PC-3 (cell line): ENCODE measurements at regions of chr20 and their contacts with region 1.

Region 1: DNA sequence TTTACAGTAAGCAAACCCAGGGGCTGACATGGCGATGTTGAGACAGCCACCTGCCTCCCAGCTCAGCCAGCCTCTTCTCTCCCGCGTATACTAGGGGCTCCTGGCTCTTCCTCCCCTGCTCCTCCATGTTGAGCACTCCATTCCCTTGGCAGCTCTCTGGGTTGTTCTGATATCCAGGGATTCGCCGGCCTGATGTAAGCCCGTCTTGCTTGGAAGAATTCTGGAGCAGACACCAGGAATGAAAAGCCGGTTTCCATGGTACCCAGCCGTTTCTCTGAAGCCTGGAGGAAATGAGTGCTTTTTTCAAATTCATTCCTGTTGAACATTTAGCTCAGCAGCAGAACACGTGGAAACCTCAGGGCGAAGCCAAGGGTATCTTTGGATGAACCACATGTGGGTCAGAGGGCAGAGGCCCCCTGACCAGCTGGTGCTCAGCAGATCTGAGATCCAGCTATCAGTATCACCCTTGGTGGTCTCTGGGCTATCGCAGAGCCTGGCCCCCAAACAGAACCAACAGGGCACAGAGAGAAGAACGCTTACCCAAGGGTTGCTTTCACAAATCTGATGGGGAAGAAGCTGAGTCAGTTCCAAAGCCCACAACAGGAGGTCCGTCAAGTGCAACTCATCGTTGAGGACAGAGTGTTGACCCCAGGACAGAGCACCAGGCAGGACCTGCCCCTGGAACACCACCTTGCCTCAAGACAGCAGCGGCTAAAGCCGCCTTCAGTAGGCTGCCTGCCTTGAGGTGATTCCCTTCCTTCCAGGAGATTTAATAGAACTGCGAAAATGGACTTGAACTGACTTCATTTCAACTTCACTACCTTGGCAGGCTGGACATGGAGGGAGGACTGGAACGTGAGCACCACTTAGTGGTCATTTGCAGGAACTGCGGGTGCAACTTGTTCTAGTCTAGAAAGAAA is 96.1 kb upstream of the RIN2 start:
- DNase-seq: peak; percentile 91
- ATAC-seq: peak; percentile 84
- H3K4me3 ChIP-seq: no peak overlapping the region
- H3K27ac ChIP-seq: no peak overlapping the region
- H3K4me1 ChIP-seq: no peaks in the 10 kb centered on the region
- H3K27me3 ChIP-seq: peaks cover 72% of the 10 kb centered on the region
- CTCF ChIP-seq: peak; percentile 98

Region 2: DNA sequence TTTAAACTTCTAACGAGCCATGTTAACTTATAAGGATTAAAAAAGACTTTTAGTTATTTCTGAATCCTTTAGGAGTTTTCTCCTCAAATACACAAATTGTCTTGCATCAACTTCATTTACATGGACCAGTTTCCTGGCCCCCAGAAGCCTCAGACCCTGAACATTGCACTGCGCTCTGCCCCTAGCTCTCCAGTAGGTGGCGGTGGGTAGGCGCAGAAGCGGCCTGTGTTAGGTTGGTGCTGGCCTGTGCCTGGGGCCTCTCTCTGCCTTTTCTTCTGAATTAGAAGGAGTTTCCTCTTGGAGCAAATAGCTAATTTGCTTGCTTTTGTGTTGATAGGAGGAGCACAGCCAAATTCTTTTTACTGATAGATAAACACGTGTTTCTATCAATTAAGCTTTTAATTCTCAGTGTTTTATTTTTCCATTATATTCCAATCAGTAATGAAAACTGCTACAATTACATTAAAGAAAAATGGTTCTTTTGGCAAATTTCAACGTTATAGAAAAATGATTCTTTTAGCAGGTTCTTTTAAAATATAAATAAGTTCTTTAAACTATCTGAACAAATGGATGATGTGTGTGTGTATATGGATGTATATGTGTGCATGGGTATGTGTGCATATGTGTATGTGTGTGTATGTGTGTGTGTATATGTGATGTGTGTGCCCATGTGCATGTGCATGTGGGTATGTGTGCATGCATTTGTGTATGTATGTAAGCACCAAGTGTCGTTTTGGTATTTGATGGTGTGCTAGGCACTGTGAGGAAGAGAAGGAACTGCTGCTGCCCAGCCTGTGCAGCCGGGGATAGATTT is 1029.6 kb before region 1 on chr20:
- CTCF ChIA-PET with region 1: no interaction called
- POLR2A ChIA-PET with region 1: no interaction called
- intact Hi-C with region 1: loop called (anchors 5 kb)
- DNase-seq: peak; percentile 67
- ATAC-seq: peak; percentile 98
- H3K4me3 ChIP-seq: no peak overlapping the region
- H3K27ac ChIP-seq: no peak overlapping the region
- H3K4me1 ChIP-seq: no peaks in the 10 kb centered on the region
- H3K27me3 ChIP-seq: no peaks in the 10 kb centered on the region
- CTCF ChIP-seq: peak; percentile 99

Region 3: GRCh38 chr20:19205977-19206396 is 456.0 kb before region 1 on chr20:
- CTCF ChIA-PET with region 1: interaction called, 9 read pairs
- POLR2A ChIA-PET with region 1: no interaction called
- intact Hi-C with region 1: loop called (anchors 1 kb)
- DNase-seq: peak; percentile 74
- ATAC-seq: peak; percentile 53; the same call in 1 of the 2 replicates
- H3K4me3 ChIP-seq: no peak overlapping the region
- H3K27ac ChIP-seq: no peak overlapping the region
- H3K4me1 ChIP-seq: no peaks in the 10 kb centered on the region
- H3K27me3 ChIP-seq: peaks cover 65% of the 10 kb centered on the region
- CTCF ChIP-seq: peak; percentile 98

Region 4: GRCh38 chr20:19522071-19522801 is 139.7 kb before region 1 on chr20:
- CTCF ChIA-PET with region 1: no interaction called
- POLR2A ChIA-PET with region 1: no interaction called
- intact Hi-C with region 1: no loop called
- DNase-seq: no peak
- ATAC-seq: no peak
- H3K4me3 ChIP-seq: no peak overlapping the region
- H3K27ac ChIP-seq: no peak overlapping the region
- H3K4me1 ChIP-seq: no peaks in the 10 kb centered on the region
- H3K27me3 ChIP-seq: peaks cover 51% of the 10 kb centered on the region
- CTCF ChIP-seq: no peak

Region 5: DNA sequence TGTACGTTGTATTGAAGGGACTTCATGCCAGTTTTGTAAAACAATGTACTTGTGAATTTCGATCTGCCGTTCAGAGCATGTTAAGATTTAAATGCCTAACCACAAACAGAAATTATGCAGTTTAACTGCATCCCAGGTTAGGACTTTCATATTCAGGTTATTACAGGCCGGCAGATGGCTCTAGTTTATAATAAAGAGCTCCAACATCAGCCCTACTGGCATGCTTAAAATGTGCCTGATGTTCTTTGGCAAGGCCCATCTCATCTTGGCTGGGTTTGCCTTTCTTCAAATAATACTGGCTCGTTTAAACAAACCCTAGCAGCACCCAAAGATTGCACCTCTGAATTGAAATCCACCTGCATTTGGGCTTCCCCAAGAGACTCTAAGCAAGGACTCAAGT is 73.2 kb before region 1 on chr20:
- CTCF ChIA-PET with region 1: no interaction called
- POLR2A ChIA-PET with region 1: no interaction called
- intact Hi-C with region 1: loop called (anchors 1 kb)
- DNase-seq: peak; percentile 32
- ATAC-seq: peak; percentile 67
- H3K4me3 ChIP-seq: no peak overlapping the region
- H3K27ac ChIP-seq: no peak overlapping the region
- H3K4me1 ChIP-seq: no peaks in the 10 kb centered on the region
- H3K27me3 ChIP-seq: peaks cover 56% of the 10 kb centered on the region
- CTCF ChIP-seq: peak; percentile 39; the same call in 1 of the 2 replicates

Region 6: GRCh38 chr20:19628570-19629169 is 33.3 kb before region 1 on chr20:
- CTCF ChIA-PET with region 1: interaction called, 6 read pairs
- POLR2A ChIA-PET with region 1: no interaction called
- intact Hi-C with region 1: loop called (anchors 1 kb)
- DNase-seq: peak; percentile 86
- ATAC-seq: peak; percentile 93
- H3K4me3 ChIP-seq: no peak overlapping the region
- H3K27ac ChIP-seq: no peak overlapping the region
- H3K4me1 ChIP-seq: no peaks in the 10 kb centered on the region
- H3K27me3 ChIP-seq: peaks cover 24% of the 10 kb centered on the region
- CTCF ChIP-seq: peak; percentile 90